Right cardiac atrium (tissue), 5 donors: ENCODE measurements at regions of chr12 and their contacts with region 1.

Region 1: DNA sequence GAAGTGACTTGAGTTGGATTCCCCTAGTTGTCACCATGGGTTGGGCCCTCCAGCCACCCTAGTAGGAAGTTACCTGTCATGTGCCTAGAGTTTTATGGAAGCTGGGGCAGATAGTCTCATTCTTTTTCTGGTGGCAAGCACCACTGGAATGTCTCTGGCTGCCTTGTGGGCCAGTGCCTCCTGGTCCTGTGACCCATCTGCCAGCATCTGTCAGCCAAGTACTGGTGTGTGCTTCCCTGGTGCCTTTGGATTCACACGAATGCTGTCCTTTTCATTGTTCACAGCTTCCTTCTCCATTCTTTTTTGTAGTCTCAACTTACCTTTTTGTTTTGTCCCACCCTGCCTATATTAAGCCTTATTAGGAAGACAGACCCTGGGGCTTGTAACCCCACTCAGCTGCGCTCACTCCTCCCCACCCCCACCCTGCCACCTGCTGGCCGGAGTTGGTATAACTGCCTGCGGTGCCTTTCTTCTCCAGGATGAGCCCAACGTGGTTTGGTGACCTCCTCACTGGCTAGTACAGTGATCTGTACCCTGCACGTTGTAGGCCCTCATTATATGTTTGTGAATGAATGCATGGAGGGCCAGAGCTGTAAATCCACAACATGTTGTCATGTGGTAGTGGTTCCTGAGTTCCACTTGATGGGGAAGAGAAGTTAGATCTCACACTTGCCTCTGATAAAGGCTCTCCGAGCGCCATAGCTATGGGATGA is 125.7 kb downstream of the TSPAN9 start:
- DNase-seq: peak in 2 of 3 donors; percentile 83 to 84
- ATAC-seq: peak; percentile 7 to 37
- H3K4me3 ChIP-seq: peak overlapping the region; percentile 45
- H3K27ac ChIP-seq: peak overlapping the region; percentile 92
- H3K4me1 ChIP-seq: peaks cover 15% of the 10 kb centered on the region
- H3K27me3 ChIP-seq: no peaks in the 10 kb centered on the region

Region 2: GRCh38 chr12:3073438-3074250 is 129.2 kb before region 1 on chr12:
- intact Hi-C with region 1: loop called in 2 of 4 experiments (anchors 5 to 10 kb)
- DNase-seq: peak; percentile 81 to 93 (median 93)
- ATAC-seq: peak; percentile 43 to 51
- H3K4me3 ChIP-seq: no peak overlapping the region
- H3K27ac ChIP-seq: peak overlapping the region; percentile 50
- H3K4me1 ChIP-seq: peaks cover 6% of the 10 kb centered on the region
- H3K27me3 ChIP-seq: no peaks in the 10 kb centered on the region

Region 3: GRCh38 chr12:3135522-3136461 is 67.1 kb before region 1 on chr12:
- intact Hi-C with region 1: loop called (anchors 2 to 10 kb)
- DNase-seq: no peak
- ATAC-seq: peak; percentile 34 to 48
- H3K4me3 ChIP-seq: no peak overlapping the region
- H3K27ac ChIP-seq: no peak overlapping the region
- H3K4me1 ChIP-seq: peaks cover 17% of the 10 kb centered on the region
- H3K27me3 ChIP-seq: no peaks in the 10 kb centered on the region

Region 4: GRCh38 chr12:3141339-3142321 is 61.3 kb before region 1 on chr12:
- intact Hi-C with region 1: loop called (anchors 2 to 10 kb)
- DNase-seq: no peak
- ATAC-seq: no peak
- H3K4me3 ChIP-seq: no peak overlapping the region
- H3K27ac ChIP-seq: no peak overlapping the region
- H3K4me1 ChIP-seq: peaks cover 5% of the 10 kb centered on the region
- H3K27me3 ChIP-seq: no peaks in the 10 kb centered on the region

Region 5: GRCh38 chr12:3148366-3149000 is 54.4 kb before region 1 on chr12:
- intact Hi-C with region 1: loop called in 1 of 4 experiments (anchors 10 kb)
- DNase-seq: peak; percentile 48 to 81 (median 77)
- ATAC-seq: no peak
- H3K4me3 ChIP-seq: no peak overlapping the region
- H3K27ac ChIP-seq: no peak overlapping the region
- H3K4me1 ChIP-seq: peaks cover 21% of the 10 kb centered on the region
- H3K27me3 ChIP-seq: no peaks in the 10 kb centered on the region

Region 6: GRCh38 chr12:3275171-3276041 is 72.5 kb after region 1 on chr12:
- intact Hi-C with region 1: loop called (anchors 5 to 10 kb)
- DNase-seq: peak; percentile 77 to 92 (median 92)
- ATAC-seq: peak; percentile 37 to 55
- H3K4me3 ChIP-seq: no peak overlapping the region
- H3K27ac ChIP-seq: peak overlapping the region; percentile 37
- H3K4me1 ChIP-seq: peaks cover 15% of the 10 kb centered on the region
- H3K27me3 ChIP-seq: no peaks in the 10 kb centered on the region

Region 7: DNA sequence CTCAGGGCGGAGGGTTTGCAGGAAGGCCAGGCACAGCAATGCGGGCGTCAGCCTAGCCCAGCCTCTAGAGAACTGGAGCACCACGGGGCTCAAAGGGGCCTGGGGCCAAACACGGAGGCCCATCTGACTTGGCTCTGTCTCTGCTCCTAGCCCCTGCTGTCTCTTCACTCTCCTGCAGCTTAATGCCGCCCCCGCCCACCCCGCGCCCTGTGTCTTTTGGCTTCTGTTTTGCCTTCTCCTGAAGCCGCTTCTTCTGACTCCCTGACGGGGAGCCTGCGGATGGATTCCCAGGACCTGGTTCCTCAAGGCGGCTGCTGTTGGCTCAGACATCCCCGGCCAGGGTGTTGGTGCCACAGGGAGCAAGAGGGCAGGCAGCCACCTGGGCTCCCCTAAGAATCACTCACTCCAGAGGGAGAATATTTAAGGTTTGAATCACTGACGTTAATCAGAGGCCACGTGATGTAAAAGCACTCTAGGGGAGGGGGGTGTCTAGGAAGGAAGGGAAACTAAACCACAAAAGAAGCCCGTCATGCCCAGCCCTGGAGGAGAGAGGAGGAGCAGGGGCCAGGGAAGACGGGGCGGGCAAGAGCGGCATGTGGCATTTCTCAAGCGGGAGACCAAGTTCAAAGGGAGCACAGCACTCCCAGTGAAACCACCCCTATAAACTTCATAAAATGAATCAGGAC is 251.2 kb after region 1 on chr12:
- intact Hi-C with region 1: no loop called
- DNase-seq: no peak
- ATAC-seq: peak in 1 of 2 donors; percentile 27
- H3K4me3 ChIP-seq: no peak overlapping the region
- H3K27ac ChIP-seq: no peak overlapping the region
- H3K4me1 ChIP-seq: no peaks in the 10 kb centered on the region
- H3K27me3 ChIP-seq: no peaks in the 10 kb centered on the region